ENCODE measurements at regions of chr4 and their contacts with region 1.

Region 1: GRCh38 chr4:115944146-115944905 is 830.9 kb upstream of the NDST4 start:
- DNase-seq: no peak
- ATAC-seq: no peak
- H3K4me3 ChIP-seq: no peak overlapping the region
- H3K27ac ChIP-seq: no peak overlapping the region
- H3K4me1 ChIP-seq: no peaks in the 10 kb centered on the region
- H3K27me3 ChIP-seq: no peaks in the 10 kb centered on the region
- CTCF ChIP-seq: no peak
- POLR2A ChIP-seq: no peak

Region 2: GRCh38 chr4:115973768-115974167 is 29.4 kb after region 1 on chr4:
- in situ Hi-C with region 1: no loop called
- intact Hi-C with region 1: loop called (anchors 2 kb)
- DNase-seq: no peak
- ATAC-seq: no peak
- H3K4me3 ChIP-seq: no peak overlapping the region
- H3K27ac ChIP-seq: no peak overlapping the region
- H3K4me1 ChIP-seq: no peaks in the 10 kb centered on the region
- H3K27me3 ChIP-seq: no peaks in the 10 kb centered on the region
- CTCF ChIP-seq: no peak
- POLR2A ChIP-seq: no peak

Region 3: GRCh38 chr4:116520886-116521285 is 576.6 kb after region 1 on chr4:
- in situ Hi-C with region 1: no loop called
- intact Hi-C with region 1: no loop called
- DNase-seq: no peak
- ATAC-seq: no peak
- H3K4me3 ChIP-seq: no peak overlapping the region
- H3K27ac ChIP-seq: no peak overlapping the region
- H3K4me1 ChIP-seq: no peaks in the 10 kb centered on the region
- H3K27me3 ChIP-seq: no peaks in the 10 kb centered on the region
- CTCF ChIP-seq: no peak
- POLR2A ChIP-seq: no peak